ENCODE measurements at regions of chr10 and their contacts with region 1.

Region 1: GRCh38 chr10:127243490-127244272 is 47.3 kb upstream of the INSYN2A start:
- DNase-seq: no peak
- H3K4me3 ChIP-seq: no peak overlapping the region
- CTCF ChIP-seq: peak; percentile 70

Region 2: DNA sequence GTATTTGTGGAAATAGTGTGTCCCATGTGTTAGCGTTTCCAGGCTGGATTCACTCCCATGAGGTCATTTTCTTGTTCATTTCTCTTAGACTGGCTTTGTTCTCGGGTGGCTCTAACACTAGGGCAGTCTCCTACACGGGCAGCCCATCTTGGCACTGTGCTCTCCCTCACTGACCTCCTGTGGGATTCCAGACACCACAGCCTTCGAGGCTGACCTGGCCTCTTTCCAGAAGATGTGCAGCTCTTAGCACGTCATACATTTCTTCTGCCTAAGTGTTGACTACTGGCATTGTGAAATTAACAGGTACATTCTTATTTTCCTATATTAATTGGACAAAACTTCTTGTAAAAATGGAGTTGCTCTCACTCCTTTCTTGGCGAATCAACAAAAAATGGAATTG is 120.1 kb before region 1 on chr10:
- CTCF ChIA-PET with region 1: no interaction called
- POLR2A ChIA-PET with region 1: no interaction called
- DNase-seq: no peak
- H3K4me3 ChIP-seq: no peak overlapping the region
- CTCF ChIP-seq: no peak

Region 3: DNA sequence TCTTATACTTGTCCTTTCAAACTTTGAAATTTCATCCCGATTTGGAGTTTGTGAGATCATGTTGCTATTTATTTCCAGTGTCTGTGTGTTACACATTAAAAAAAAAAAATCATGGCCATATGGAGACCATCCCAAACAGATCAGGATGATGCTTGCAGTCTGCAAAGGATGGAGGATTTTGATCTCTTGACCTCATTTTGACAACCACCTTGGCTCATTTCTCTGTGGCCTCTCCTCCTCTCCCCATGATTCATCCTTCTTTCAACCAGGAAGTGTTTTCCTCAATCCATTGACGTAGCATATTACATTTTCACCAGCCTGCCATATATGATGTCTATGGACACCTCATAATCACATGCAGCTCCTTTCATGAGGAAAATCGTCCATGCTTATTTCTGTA is 21.6 kb after region 1 on chr10:
- CTCF ChIA-PET with region 1: interaction called, 10 read pairs
- POLR2A ChIA-PET with region 1: no interaction called
- DNase-seq: no peak
- H3K4me3 ChIP-seq: no peak overlapping the region
- CTCF ChIP-seq: no peak